ENCODE measurements at regions of chr5 and their contacts with region 1.

Region 1: GRCh38 chr5:112995764-112996618 is 19.4 kb downstream of the DCP2 start:
- DNase-seq: peak; percentile 39 to 85 (median 69)
- ATAC-seq: peak; percentile 77 to 84 (median 81)
- H3K4me3 ChIP-seq: no peak overlapping the region
- H3K4me3 Mint-ChIP-seq: no peak overlapping the region
- H3K27ac ChIP-seq: no peak overlapping the region
- H3K27ac Mint-ChIP-seq: peak overlapping the region in 1 of 2 donors; percentile 33
- H3K4me1 ChIP-seq: peaks cover 2 to 10% of the 10 kb centered on the region in 2 experiments
- H3K4me1 Mint-ChIP-seq: peaks cover 32 to 41% (median 40%) of the 10 kb centered on the region in 3 donors
- H3K27me3 ChIP-seq: no peaks in the 10 kb centered on the region
- H3K27me3 Mint-ChIP-seq: no peaks in the 10 kb centered on the region

Region 2: DNA sequence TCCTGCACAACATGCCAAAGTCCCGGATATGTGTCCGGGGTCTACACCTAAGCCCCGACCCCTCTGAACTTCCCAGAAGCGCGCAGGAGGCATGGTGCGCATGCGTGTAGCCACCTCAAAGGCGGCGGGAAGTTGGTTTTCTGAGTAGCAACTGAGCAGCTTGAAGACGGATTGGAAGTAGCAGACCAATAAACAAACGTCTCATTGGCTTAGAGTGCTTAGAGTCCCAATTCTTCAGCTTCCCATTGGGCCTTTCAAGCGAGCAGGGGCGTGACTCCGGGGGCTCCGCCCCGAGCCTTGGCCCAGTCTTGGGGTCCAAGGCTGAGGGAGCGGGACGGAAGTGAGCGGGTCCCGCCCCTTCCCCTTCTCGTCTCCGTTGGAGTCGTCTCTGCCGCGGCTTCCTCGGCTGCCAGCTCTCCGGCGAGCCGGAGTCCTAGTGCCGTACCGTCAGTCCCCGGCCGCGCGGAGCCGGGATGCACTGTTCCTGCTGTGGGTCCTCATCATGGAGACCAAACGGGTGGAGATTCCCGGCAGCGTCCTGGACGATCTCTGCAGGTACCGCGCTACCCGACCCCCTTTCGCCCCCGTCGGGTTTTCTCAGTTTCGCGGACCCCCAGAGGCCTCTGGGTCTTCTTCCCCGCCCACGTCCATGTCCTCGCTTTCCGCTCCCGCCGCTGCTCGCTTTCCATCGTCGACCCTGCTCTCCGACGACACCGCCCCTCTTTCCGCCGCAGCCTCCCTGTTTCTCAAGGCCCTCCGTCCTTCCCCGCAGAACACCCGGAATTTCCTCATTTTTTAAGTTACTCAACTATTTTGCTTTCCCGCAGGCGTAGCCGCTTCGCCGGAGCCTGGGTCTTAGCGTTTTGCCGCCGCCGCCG is 19.3 kb before region 1 on chr5 and contains the start of gene DCP2:
- CTCF ChIA-PET with region 1: interaction called, 11 to 43 read pairs
- POLR2A ChIA-PET with region 1: interaction called, 3 to 4 read pairs
- DNase-seq: peak; percentile 91 to 98 (median 95)
- ATAC-seq: peak; percentile 95 to 97 (median 96)
- H3K4me3 ChIP-seq: peak within 1 kb of the TSS; percentile 94 to 99
- H3K4me3 Mint-ChIP-seq: peak within 1 kb of the TSS; percentile 95 to 99 (median 97)
- H3K27ac ChIP-seq: peak within 1 kb of the TSS; percentile 78
- H3K27ac Mint-ChIP-seq: peak within 1 kb of the TSS; percentile 96 to 97
- H3K4me1 ChIP-seq: peaks cover 16 to 25% of the 10 kb centered on the region in 2 experiments
- H3K4me1 Mint-ChIP-seq: peaks cover 45 to 56% (median 50%) of the 10 kb centered on the region in 3 donors
- H3K27me3 ChIP-seq: no peaks in the 10 kb centered on the region
- H3K27me3 Mint-ChIP-seq: no peaks in the 10 kb centered on the region
- total RNA-seq, gene DCP2: 68.6 to 88.5 (median 71.9) TPM

Region 3: DNA sequence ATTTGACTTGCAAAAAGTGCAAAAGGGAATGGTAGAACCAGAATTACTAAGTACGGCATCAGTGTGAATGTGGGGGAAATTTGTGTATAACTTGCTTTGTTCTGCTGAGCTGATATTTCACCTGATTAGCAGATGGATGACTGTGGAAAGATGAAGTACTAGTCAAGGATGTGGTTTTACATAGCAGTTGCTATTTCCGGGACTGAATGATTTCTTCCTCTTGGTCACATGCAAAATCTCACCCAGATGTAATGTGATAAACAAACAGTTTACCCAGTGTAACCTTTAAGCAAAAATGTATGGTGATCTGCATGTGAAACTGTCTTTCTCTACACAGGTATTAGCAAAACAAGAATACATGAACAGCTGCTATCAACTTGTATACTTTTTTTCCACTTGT is 26.7 kb after region 1 on chr5:
- CTCF ChIA-PET with region 1: interaction called, 6 to 20 read pairs
- POLR2A ChIA-PET with region 1: no interaction called
- DNase-seq: peak in 9 of 35 experiments; percentile 7 to 79 (median 19)
- ATAC-seq: peak; percentile 84 to 94 (median 92)
- H3K4me3 ChIP-seq: no peak overlapping the region
- H3K4me3 Mint-ChIP-seq: peak overlapping the region; percentile 11 to 45 (median 32)
- H3K27ac ChIP-seq: peak overlapping the region; percentile 55
- H3K27ac Mint-ChIP-seq: peak overlapping the region; percentile 85 to 96
- H3K4me1 ChIP-seq: peaks cover 19 to 54% of the 10 kb centered on the region in 2 experiments
- H3K4me1 Mint-ChIP-seq: peaks cover 66 to 74% (median 72%) of the 10 kb centered on the region in 3 donors
- H3K27me3 ChIP-seq: no peaks in the 10 kb centered on the region
- H3K27me3 Mint-ChIP-seq: no peaks in the 10 kb centered on the region

Region 4: DNA sequence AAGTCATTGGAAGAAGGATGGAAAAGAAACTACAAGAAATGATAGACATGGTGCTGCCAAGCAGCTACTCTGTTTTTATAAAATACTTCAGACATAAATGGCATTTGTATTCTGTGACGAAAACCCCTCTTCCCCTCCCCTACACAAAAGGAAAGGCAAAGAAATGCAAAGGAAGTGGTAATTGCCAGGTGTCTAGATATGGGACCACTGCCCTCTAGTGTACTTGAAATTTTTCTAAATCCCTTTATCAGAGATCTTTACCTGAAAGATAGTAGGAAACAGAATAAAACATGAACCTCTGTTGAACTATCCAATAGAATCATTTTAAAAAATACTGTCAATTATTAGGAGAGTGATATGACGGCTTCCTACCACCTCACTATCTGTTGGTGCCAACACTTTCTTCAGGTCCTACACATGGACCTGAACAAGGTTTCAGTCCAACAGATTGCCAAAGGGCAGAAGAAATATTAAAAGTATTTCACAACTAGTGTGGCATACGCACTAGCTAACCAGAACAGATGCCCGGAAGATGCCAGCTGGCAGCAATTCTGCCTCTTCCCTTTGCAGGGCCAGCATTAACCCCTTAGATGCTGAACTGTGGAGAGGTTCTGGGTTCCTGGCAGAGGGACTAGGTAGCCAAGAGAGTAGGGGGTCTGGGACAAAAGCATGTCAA is 334.7 kb after region 1 on chr5:
- CTCF ChIA-PET with region 1: interaction called, 37 to 117 read pairs
- POLR2A ChIA-PET with region 1: interaction called in 1 of 2 experiments, 3 read pairs
- DNase-seq: peak in 10 of 35 experiments; percentile 4 to 77 (median 16)
- ATAC-seq: peak; percentile 78 to 88 (median 87)
- H3K4me3 ChIP-seq: no peak overlapping the region
- H3K4me3 Mint-ChIP-seq: no peak overlapping the region
- H3K27ac ChIP-seq: no peak overlapping the region
- H3K27ac Mint-ChIP-seq: peak overlapping the region in 1 of 2 donors; percentile 19
- H3K4me1 ChIP-seq: peaks cover 4% of the 10 kb centered on the region in 2 experiments
- H3K4me1 Mint-ChIP-seq: peaks cover 16 to 19% (median 18%) of the 10 kb centered on the region in 3 donors
- H3K27me3 ChIP-seq: no peaks in the 10 kb centered on the region
- H3K27me3 Mint-ChIP-seq: no peaks in the 10 kb centered on the region

Region 5: DNA sequence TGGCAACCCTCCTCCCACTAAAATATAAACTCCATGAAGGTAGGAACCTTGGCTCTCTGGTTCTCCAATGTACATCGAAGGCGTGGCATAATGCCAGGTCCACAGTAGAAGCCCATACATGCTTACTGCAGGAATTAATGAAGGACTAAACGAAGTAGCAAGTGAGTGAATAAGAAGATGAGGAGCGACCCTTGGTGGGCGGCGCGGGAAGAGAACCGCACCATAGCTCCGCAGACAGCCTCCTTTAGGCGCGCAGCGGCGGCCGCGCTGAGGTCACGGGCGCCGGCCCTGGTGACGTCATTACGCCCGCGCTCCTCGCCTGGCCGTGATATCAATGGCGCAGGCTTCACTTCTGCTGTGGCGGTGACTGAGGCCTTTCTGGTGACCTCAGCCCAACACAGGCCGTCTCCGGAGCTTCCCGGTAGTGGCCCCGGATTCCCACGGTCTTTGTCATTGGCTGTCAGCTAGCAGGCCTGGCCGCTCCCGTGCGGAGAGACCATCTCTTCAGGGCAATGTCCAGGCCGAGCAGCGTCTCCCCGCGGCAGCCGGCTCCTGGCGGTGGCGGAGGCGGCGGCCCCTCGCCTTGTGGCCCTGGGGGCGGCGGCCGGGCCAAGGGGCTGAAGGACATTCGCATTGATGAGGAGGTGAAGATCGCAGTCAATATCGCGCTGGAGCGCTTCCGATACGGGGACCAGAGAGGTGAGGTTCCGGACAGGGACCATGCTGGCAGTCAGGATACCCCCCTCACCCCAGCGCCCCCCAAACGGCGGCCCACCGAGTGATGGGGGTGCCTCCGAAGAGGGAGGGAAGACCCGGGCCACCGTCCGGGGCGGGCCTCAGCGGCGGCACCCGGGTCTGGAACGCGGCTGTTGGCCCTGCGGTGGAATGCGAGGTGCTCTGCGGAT is 517.6 kb after region 1 on chr5 and contains the start of gene YTHDC2:
- CTCF ChIA-PET with region 1: interaction called, 9 to 13 read pairs
- POLR2A ChIA-PET with region 1: interaction called in 1 of 2 experiments, 8 read pairs
- DNase-seq: peak; percentile 75 to 94 (median 86)
- ATAC-seq: peak; percentile 98 to 99 (median 99)
- H3K4me3 ChIP-seq: peak within 1 kb of the TSS; percentile 70 to 86
- H3K4me3 Mint-ChIP-seq: peak within 1 kb of the TSS; percentile 92 to 93 (median 92)
- H3K27ac ChIP-seq: peak within 1 kb of the TSS; percentile 93
- H3K27ac Mint-ChIP-seq: peak within 1 kb of the TSS; percentile 83 to 95
- H3K4me1 ChIP-seq: peaks cover 8 to 11% of the 10 kb centered on the region in 2 experiments
- H3K4me1 Mint-ChIP-seq: peaks cover 36 to 39% (median 36%) of the 10 kb centered on the region in 3 donors
- H3K27me3 ChIP-seq: peaks cover 3 to 4% of the 10 kb centered on the region in 2 experiments
- H3K27me3 Mint-ChIP-seq: peaks cover 9 to 13% of the 10 kb centered on the region in 2 donors
- total RNA-seq, gene YTHDC2: 31.5 to 52.0 (median 38.2) TPM

Region 6: DNA sequence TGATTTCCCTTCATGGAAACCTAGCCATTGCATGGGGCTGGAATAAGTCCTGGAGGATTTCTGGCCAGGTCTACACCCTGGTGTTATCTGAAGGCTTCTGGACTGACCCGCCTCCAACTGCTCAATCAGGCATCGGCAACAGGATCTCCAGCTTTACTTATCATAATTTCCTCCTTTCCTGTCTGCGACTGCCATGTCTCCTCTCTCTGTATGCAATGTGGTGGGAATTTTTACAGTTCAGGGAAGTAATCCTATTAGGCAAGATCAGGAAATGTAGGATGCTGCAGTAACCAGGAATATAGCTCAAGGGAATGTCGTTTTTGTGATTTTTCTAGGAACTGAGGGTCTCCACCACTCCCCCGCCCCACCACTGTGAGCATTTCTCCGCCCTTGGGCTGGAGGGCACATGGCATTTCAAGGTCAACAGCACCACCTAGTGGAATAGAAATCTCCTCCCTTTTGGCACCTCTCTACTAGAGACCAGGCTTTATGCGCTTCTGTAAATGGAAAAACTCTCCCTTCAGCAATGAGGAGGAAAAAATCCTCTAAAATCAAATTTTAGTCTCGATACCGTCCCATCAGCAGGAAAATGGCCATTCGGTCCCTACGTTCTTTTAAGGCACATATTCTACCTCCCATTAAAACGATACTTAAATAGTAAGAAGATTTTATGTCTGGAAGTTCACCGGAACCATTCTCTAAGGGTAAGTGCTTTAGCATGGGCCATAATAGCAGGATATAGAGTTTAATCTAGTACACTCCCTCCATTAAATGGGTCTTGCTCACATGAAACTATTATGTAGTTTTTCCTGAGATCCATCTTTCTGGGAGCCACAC is 610.5 kb after region 1 on chr5:
- CTCF ChIA-PET with region 1: interaction called, 19 to 49 read pairs
- POLR2A ChIA-PET with region 1: no interaction called
- DNase-seq: peak in 28 of 35 experiments; percentile 2 to 73 (median 19)
- ATAC-seq: peak in 3 of 4 experiments; percentile 76 to 85 (median 78)
- H3K4me3 ChIP-seq: no peak overlapping the region
- H3K4me3 Mint-ChIP-seq: no peak overlapping the region
- H3K27ac ChIP-seq: no peak overlapping the region
- H3K27ac Mint-ChIP-seq: peak overlapping the region in 1 of 2 donors; percentile 6
- H3K4me1 ChIP-seq: peaks cover 0 to 3% of the 10 kb centered on the region in 2 experiments
- H3K4me1 Mint-ChIP-seq: peaks cover 3 to 8% (median 3%) of the 10 kb centered on the region in 3 donors
- H3K27me3 ChIP-seq: peaks cover 0 to 7% of the 10 kb centered on the region in 2 experiments
- H3K27me3 Mint-ChIP-seq: peaks cover 10 to 23% of the 10 kb centered on the region in 2 donors

Measured in T-cell (primary cell).